ENCODE measurements at regions of chr7 and their contacts with region 1.

Region 1: DNA sequence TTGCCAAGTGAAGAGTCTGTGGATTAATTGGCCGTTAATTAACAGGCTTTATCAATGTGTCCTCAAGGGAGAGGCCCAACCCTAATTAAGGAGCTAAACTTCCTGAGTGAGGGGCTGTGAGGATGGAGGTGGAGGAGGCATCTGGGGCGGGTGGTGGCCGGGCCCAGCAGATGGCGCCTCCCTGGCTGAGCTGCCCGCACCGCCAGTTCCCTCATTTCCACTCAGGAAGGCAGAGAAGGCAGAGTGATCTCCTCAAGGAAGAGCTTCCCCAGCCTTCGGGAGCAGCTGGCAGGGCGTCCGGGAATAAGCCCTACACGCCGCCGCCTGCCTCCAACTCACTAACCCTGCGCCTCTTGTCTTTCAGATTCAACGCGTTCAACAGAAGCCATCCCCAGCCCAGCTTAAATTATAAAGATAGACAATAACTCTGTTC is 112.2 kb downstream of the CYTH3 start:
- DNase-seq: peak; percentile 70 to 71
- ATAC-seq: peak; percentile 31 to 73 (median 67)
- H3K4me3 ChIP-seq: no peak overlapping the region
- H3K27ac ChIP-seq: peak overlapping the region in 9 of 10 donors; percentile 30 to 91 (median 42)
- H3K4me1 ChIP-seq: peaks cover 20 to 61% (median 35%) of the 10 kb centered on the region in 9 donors
- H3K27me3 ChIP-seq: no peaks in the 10 kb centered on the region
- CTCF ChIP-seq: peak; percentile 53 to 87 (median 76)

Region 2: GRCh38 chr7:6106140-6106904 is 53.9 kb before region 1 on chr7:
- intact Hi-C with region 1: no loop called
- DNase-seq: no peak
- ATAC-seq: no peak
- H3K4me3 ChIP-seq: peak overlapping the region; percentile 47 to 81 (median 61)
- H3K27ac ChIP-seq: peak overlapping the region in 9 of 10 donors; percentile 47 to 89 (median 75)
- H3K4me1 ChIP-seq: peaks cover 0 to 33% (median 20%) of the 10 kb centered on the region in 9 donors
- H3K27me3 ChIP-seq: no peaks in the 10 kb centered on the region
- CTCF ChIP-seq: peak in 5 of 9 donors; percentile 31 to 47 (median 45)

Region 3: GRCh38 chr7:6228361-6229229 is 68.4 kb after region 1 on chr7:
- intact Hi-C with region 1: loop called in 3 of 10 experiments (anchors 5 to 10 kb)
- DNase-seq: peak in 1 of 2 donors; percentile 48
- ATAC-seq: peak; percentile 62 to 78 (median 72)
- H3K4me3 ChIP-seq: peak overlapping the region in 7 of 10 donors; percentile 3 to 33 (median 19)
- H3K27ac ChIP-seq: peak overlapping the region; percentile 39 to 83 (median 70)
- H3K4me1 ChIP-seq: peaks cover 21 to 100% (median 87%) of the 10 kb centered on the region in 9 donors
- H3K27me3 ChIP-seq: no peaks in the 10 kb centered on the region
- CTCF ChIP-seq: no peak

Region 4: GRCh38 chr7:6256677-6257535 is 96.7 kb after region 1 on chr7:
- intact Hi-C with region 1: loop called in 4 of 10 experiments (anchors 5 to 10 kb)
- DNase-seq: peak; percentile 47 to 62
- ATAC-seq: peak; percentile 53 to 88 (median 73)
- H3K4me3 ChIP-seq: peak overlapping the region in 1 of 10 donors; percentile 11
- H3K27ac ChIP-seq: peak overlapping the region; percentile 4 to 79 (median 66)
- H3K4me1 ChIP-seq: peaks cover 18 to 100% (median 86%) of the 10 kb centered on the region in 9 donors
- H3K27me3 ChIP-seq: no peaks in the 10 kb centered on the region
- CTCF ChIP-seq: no peak

Region 5: DNA sequence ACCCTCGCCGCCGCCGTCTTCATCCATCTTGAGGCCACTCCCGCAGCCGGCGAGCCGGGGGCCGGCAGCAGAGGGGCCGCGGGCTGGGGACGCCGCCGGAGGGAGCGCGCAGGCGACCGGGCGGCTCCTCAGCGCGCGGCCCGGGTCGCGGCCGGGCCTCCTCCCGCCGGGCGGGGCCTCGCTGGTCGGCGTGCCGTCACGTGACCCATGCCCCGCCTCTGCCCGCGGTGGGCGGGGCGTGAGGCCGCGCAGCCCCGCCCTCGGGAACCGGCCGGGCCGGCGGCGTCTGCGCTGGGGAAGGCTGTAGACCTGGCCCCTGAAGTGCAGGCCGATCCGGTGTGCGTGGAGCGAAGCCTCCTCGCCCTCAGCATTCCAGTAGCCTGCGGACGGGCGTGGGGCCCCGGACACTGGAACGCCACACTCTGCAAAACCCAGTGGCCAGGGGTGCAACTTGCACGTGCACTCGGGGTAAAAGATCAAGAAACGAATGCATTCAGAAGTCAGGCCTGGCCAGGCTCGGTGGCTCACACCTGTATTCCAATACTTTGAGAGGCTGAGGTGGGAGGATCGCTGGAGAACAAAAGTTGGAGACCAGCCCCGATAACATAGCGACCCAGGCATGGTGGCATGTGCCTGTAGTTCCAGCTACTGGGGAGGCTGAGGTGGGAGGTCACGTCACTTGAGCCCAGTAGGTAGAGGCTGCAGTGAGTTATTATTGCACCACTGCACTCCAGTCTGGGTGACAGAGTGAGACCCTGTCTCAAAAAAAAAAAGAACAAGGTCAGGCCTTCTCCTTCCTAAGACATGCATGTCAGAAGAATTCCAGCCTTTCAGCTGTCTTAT is 112.5 kb after region 1 on chr7 and contains the start of gene CYTH3:
- intact Hi-C with region 1: loop called (anchors 2 to 10 kb)
- DNase-seq: peak; percentile 70 to 86
- ATAC-seq: peak; percentile 88 to 97 (median 94)
- H3K4me3 ChIP-seq: peak within 1 kb of the TSS; percentile 80 to 99 (median 94)
- H3K27ac ChIP-seq: peak within 1 kb of the TSS; percentile 84 to 93 (median 90)
- H3K4me1 ChIP-seq: peaks cover 0 to 40% (median 34%) of the 10 kb centered on the region in 9 donors
- H3K27me3 ChIP-seq: peaks cover 0 to 12% (median 0%) of the 10 kb centered on the region in 7 donors
- CTCF ChIP-seq: peak in 1 of 9 donors; percentile 9
- total RNA-seq, gene CYTH3: 16.2 to 27.9 (median 23.2) TPM

Region 6: GRCh38 chr7:6317797-6318438 is 157.7 kb after region 1 on chr7:
- intact Hi-C with region 1: loop called in 9 of 10 experiments (anchors 1 to 5 kb)
- DNase-seq: peak; percentile 52 to 79
- ATAC-seq: peak; percentile 85 to 96 (median 94)
- H3K4me3 ChIP-seq: peak overlapping the region in 8 of 10 donors; percentile 5 to 40 (median 22)
- H3K27ac ChIP-seq: peak overlapping the region; percentile 4 to 85 (median 73)
- H3K4me1 ChIP-seq: peaks cover 3 to 32% (median 18%) of the 10 kb centered on the region in 9 donors
- H3K27me3 ChIP-seq: no peaks in the 10 kb centered on the region
- CTCF ChIP-seq: no peak

Region 7: DNA sequence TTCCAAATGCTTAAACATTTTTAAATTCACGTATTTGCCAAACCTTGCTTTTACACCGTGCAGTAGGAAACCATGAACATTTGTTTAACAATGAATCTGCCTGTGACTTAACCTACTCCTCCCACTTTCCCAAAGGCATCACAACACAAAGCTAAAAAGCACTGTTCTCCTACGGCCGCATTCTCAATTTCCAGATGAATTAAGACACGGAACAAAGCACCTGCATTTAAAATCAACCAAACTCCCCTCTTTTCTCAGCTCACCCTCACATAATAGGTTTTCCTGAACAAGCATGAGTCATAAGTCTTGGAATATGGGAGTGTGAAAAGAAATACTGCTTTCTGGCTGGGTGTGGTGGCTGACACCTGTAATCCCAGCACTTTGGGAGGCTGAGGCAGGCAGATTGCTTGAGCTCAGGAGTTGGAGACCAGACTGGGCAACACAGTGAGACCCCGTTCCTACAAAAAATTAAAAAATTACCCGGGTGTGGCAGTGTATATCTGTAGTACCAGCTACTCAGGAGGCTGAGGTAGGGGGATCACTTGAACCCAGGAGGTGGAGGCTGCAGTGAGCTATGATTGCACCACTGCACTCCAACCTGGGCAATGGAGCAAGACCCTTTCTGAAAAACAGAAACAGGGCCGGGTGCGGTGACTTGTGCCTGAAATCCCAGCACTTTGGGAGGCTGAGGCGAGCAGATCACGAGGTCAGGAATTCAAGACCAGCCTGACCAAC is 163.9 kb after region 1 on chr7:
- intact Hi-C with region 1: loop called (anchors 1 to 5 kb)
- DNase-seq: no peak
- ATAC-seq: no peak
- H3K4me3 ChIP-seq: no peak overlapping the region
- H3K27ac ChIP-seq: no peak overlapping the region
- H3K4me1 ChIP-seq: peaks cover 0 to 9% (median 0%) of the 10 kb centered on the region in 9 donors
- H3K27me3 ChIP-seq: no peaks in the 10 kb centered on the region
- CTCF ChIP-seq: no peak

Region 8: DNA sequence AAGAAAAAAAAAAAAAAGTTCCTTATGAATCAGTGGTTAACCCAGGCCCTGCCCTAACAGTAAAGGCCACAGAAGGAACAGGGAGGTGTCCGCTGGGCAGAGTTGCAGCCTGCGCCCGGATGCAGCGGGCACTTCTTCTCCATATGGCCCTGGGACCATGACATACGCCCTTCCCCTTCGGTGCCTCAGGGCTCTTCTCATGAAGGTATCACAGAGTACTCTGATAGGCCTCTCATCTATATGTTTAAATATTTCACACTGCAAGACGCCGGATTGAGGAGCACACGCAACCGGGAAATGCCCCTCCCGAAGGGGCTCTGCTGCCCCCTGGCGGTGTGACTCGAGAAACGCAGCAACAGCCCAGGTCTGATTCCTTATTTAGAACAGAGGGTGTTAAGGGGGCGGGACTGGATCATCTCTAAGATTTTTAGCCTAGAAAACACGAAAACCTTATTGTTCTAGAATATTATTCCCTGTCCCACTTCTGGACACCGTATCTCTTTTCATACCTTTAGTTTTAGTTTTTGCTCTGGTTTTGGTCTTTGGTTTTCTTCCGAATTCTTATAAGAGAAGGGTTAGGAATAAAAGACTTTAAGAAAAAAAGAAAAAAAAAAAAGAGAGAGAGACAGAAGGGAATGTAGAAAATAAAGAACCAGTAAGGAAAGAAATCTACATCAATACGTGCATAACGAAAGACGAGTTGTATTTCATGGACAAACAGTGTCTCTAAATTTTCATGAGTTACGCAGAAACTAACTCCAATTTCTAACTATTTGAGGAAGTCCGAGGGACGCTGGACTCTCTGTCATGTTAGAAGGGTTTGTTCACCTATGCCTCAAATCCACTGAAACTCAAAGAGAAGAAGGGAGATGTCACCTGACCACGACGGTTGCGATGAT is 275.5 kb after region 1 on chr7:
- intact Hi-C with region 1: no loop called
- DNase-seq: peak; percentile 81 to 85
- ATAC-seq: peak; percentile 64 to 89 (median 84)
- H3K4me3 ChIP-seq: peak overlapping the region in 6 of 10 donors; percentile 18 to 37 (median 24)
- H3K27ac ChIP-seq: peak overlapping the region; percentile 18 to 86 (median 50)
- H3K4me1 ChIP-seq: peaks cover 0 to 76% (median 40%) of the 10 kb centered on the region in 9 donors
- H3K27me3 ChIP-seq: no peaks in the 10 kb centered on the region
- CTCF ChIP-seq: peak; percentile 93 to 99 (median 98)

Measured in heart right ventricle (tissue), 16 donors.